Activated CD4-positive, alpha-beta T cell treated with anti-CD3 and anti-CD28 coated beads for 36 hours (primary cell): ENCODE measurements at regions of chr12 and their contacts with region 1.

Region 1: GRCh38 chr12:949453-950191 is at the start of gene RAD52:
- DNase-seq: peak; percentile 99
- ATAC-seq: peak; percentile 93
- H3K4me3 Mint-ChIP-seq: peak within 1 kb of the TSS; percentile 100
- H3K27ac Mint-ChIP-seq: peak within 1 kb of the TSS; percentile 98
- H3K4me1 Mint-ChIP-seq: peaks cover 37% of the 10 kb centered on the region
- H3K27me3 Mint-ChIP-seq: no peaks in the 10 kb centered on the region
- total RNA-seq, gene RAD52: 16.0 to 17.4 TPM

Region 2: DNA sequence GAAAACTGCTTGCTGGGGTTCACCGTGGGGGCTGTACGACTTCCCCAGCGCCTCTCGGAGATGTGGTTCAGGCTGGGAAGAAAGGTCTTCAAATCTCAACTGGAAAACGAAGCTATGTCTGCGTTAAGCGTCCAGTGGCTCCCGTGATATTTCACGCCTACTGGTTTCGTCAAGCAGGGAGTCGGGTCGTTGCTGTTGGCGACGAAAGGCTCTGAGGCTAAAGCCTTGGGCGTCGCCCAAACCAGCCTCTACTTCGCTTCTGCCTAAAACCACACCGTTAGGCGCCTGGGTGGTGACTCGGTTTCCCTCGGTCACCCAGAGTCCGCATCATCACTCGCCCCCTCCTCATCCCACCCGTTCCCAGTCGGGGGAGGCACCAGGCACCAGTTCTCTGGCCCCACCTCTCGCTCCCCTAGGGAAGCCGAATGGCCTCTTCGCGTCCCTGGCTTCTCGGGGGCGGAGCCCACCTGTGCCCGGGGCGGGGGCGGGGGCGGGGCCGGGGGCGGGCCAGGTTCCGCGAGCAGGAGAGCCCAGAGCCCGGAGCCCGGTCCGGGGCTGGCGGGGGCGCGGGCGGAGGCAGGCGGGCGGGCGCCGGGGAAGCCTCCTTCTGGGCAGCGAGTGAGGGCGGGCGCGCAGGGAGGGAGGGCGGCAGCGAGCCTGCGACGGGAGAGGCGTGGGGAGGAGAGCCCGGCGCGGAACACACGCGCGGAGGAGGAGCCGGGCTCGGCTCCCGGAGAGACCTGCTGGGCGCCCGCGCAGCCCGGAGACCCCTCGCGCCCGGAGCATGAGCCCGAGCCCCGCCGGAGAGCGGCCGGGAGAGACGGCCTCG is 490.0 kb before region 1 on chr12 and contains the start of gene B4GALNT3:
- CTCF ChIA-PET with region 1: no interaction called
- POLR2A ChIA-PET with region 1: no interaction called
- intact Hi-C with region 1: loop called in 1 of 2 experiments (anchors 2 kb)
- DNase-seq: peak; percentile 63
- ATAC-seq: peak; percentile 60
- H3K4me3 Mint-ChIP-seq: peak within 1 kb of the TSS; percentile 74
- H3K27ac Mint-ChIP-seq: no peak within 1 kb of the TSS
- H3K4me1 Mint-ChIP-seq: peaks cover 15% of the 10 kb centered on the region
- H3K27me3 Mint-ChIP-seq: peaks cover 26% of the 10 kb centered on the region
- total RNA-seq, gene B4GALNT3: 2.2 to 3.3 TPM

Region 3: GRCh38 chr12:642633-643474 is 306.8 kb before region 1 on chr12:
- CTCF ChIA-PET with region 1: interaction called, 3 read pairs
- POLR2A ChIA-PET with region 1: no interaction called
- intact Hi-C with region 1: loop called in 1 of 2 experiments (anchors 1 kb)
- DNase-seq: peak; percentile 85
- ATAC-seq: peak; percentile 59
- H3K4me3 Mint-ChIP-seq: peak overlapping the region; percentile 83
- H3K27ac Mint-ChIP-seq: peak overlapping the region; percentile 97
- H3K4me1 Mint-ChIP-seq: peaks cover 64% of the 10 kb centered on the region
- H3K27me3 Mint-ChIP-seq: no peaks in the 10 kb centered on the region

Region 4: DNA sequence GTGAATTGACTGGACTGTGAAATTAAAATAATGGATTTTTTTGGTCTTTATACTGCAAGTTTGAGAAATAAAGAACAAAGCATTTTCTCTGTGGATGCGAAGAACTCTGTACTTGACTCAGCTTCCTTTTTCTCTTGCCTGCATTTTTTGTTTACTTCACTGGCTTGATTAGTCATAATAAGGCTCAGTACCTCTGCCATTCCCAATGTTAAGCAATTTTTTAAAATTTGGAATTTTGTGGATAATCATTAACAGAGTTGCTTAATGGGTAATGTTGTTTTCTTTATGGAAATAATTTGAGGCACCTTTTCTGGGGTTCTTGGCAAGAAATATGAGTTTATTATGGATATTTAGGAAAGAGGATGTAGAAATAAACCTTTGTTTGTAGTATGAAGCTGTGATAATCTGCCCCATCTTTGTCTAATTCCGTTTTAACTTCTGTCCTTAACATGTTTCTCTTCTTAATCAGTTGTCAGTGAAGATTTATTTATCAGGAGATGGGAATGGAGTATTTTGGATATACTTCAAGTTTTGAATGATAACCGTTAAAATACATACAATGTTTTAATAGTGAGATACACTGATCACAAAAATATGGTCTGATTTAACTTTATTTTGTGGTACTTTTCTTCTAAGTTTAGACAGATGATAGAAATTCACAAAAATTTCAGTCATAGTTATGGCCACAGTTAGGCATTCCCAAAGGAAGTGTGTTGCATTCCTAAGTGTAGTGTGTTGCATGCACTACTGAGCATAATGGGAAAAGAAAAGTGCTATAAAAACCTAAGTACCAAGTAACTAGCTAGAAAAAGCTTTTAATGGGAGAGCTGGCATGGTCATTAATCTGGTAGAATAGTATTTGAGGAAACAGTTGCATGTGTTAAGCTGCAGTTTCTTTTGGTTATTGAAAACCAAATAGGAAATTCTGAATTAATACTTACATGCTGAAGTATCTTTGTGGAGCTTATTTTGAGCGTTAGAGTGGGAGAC is 169.6 kb before region 1 on chr12:
- CTCF ChIA-PET with region 1: no interaction called
- POLR2A ChIA-PET with region 1: no interaction called
- intact Hi-C with region 1: no loop called
- DNase-seq: no peak
- ATAC-seq: peak; percentile 62
- H3K4me3 Mint-ChIP-seq: peak overlapping the region; percentile 64
- H3K27ac Mint-ChIP-seq: peak overlapping the region; percentile 75
- H3K4me1 Mint-ChIP-seq: peaks cover 70% of the 10 kb centered on the region
- H3K27me3 Mint-ChIP-seq: no peaks in the 10 kb centered on the region

Region 5: GRCh38 chr12:810671-811415 is 138.8 kb before region 1 on chr12:
- CTCF ChIA-PET with region 1: interaction called, 8 read pairs
- POLR2A ChIA-PET with region 1: no interaction called
- intact Hi-C with region 1: loop called (anchors 1 kb)
- DNase-seq: peak; percentile 84
- ATAC-seq: peak; percentile 95
- H3K4me3 Mint-ChIP-seq: peak overlapping the region; percentile 32
- H3K27ac Mint-ChIP-seq: peak overlapping the region; percentile 78
- H3K4me1 Mint-ChIP-seq: peaks cover 68% of the 10 kb centered on the region
- H3K27me3 Mint-ChIP-seq: no peaks in the 10 kb centered on the region

Region 6: DNA sequence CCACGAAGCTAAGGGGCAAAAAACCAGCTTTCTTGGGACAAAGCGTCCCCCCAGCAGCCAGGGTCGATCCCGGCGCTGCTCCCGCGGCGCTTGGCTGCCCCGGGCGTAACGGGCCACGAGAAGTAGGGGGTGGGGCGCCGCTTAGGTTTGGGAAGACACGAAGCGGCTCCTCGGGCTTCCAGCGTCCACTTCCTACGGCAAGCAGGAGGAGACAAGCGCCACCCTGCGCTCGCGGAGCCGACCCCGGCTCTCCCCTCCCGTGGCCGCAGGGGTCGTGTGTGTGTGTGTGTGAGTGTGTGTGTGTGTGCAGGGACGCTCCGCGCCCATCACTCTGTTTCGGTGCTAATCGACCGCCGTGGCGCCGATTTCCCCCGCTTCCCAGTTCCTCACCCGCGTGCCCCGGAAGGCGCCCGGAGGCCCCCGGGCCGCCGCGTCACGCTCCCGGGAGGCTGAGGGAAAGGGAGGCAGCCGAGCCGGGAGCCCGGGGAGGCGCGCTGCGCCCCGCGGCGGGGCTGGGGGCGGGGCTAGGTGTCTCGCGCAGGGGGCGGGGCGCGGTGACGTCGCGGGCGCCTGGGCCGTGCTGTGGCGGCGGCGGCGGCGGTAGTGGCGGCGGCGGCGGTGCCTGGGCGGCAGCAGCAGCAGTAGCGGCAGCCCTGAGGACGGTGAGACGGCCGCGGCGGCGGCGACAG is 41.2 kb after region 1 on chr12 and contains the start of gene ERC1:
- CTCF ChIA-PET with region 1: interaction called, 3 read pairs
- POLR2A ChIA-PET with region 1: interaction called, 10 read pairs
- intact Hi-C with region 1: loop called (anchors 1 kb)
- DNase-seq: peak; percentile 92
- ATAC-seq: peak; percentile 88
- H3K4me3 Mint-ChIP-seq: peak within 1 kb of the TSS; percentile 92
- H3K27ac Mint-ChIP-seq: peak within 1 kb of the TSS; percentile 95
- H3K4me1 Mint-ChIP-seq: peaks cover 44% of the 10 kb centered on the region
- H3K27me3 Mint-ChIP-seq: no peaks in the 10 kb centered on the region
- total RNA-seq, gene ERC1: 24.7 to 31.9 TPM

Region 7: GRCh38 chr12:1073652-1074051 is 124.0 kb after region 1 on chr12:
- CTCF ChIA-PET with region 1: no interaction called
- POLR2A ChIA-PET with region 1: no interaction called
- intact Hi-C with region 1: no loop called
- DNase-seq: no peak
- ATAC-seq: no peak
- H3K4me3 Mint-ChIP-seq: no peak overlapping the region
- H3K27ac Mint-ChIP-seq: no peak overlapping the region
- H3K4me1 Mint-ChIP-seq: peaks cover 12% of the 10 kb centered on the region
- H3K27me3 Mint-ChIP-seq: no peaks in the 10 kb centered on the region

Region 8: DNA sequence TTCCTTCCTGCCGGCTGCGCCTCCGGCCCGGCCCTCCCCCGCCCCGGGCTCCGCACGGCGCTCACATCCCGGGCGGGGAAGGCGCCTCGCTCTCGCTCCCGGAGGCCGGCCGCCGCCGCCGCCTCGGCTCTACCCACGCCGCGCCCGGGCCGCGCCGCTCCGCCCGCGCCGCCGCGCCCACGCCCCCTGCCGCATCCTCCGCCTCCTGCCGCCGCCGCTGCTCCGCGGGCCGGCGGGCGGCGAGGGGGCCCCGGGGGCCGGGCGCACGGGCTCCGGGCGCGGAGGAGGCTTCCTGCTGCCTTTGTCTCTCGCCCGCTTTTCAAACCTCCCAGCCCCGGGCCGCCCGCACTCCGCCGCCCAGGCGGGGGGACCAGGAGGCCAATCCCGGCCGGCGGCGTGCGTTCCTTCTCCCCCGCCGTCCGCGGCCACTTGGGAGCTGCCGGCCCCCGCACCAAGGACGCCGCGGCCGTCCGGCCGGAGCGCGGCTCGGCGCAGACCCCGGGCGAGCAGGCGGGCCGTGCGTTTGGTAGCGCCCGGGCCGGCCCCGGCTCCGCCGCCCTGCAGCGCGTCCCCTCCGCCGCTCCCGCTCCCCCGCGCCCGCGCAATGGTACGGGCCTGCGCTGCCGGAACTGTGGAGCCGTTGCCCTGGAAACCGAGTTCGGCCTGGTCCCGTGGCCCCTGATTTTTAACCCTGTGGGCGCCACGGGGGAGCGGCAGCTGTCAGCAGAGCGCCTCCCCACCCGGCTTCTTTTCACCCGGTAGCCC is 644.8 kb after region 1 on chr12 and contains the start of gene FBXL14:
- CTCF ChIA-PET with region 1: interaction called, 7 read pairs
- POLR2A ChIA-PET with region 1: no interaction called
- intact Hi-C with region 1: loop called in 1 of 2 experiments (anchors 1 kb)
- DNase-seq: peak; percentile 93
- ATAC-seq: peak; percentile 57
- H3K4me3 Mint-ChIP-seq: peak within 1 kb of the TSS; percentile 98
- H3K27ac Mint-ChIP-seq: peak within 1 kb of the TSS; percentile 93
- H3K4me1 Mint-ChIP-seq: peaks cover 38% of the 10 kb centered on the region
- H3K27me3 Mint-ChIP-seq: no peaks in the 10 kb centered on the region
- total RNA-seq, gene FBXL14: 17.0 to 17.8 TPM

Region 9: GRCh38 chr12:2641209-2641608 is 1691.6 kb after region 1 on chr12:
- CTCF ChIA-PET with region 1: no interaction called
- POLR2A ChIA-PET with region 1: no interaction called
- intact Hi-C with region 1: no loop called
- DNase-seq: peak; percentile 21
- ATAC-seq: no peak
- H3K4me3 Mint-ChIP-seq: no peak overlapping the region
- H3K27ac Mint-ChIP-seq: no peak overlapping the region
- H3K4me1 Mint-ChIP-seq: peaks cover 25% of the 10 kb centered on the region
- H3K27me3 Mint-ChIP-seq: peaks cover 15% of the 10 kb centered on the region